CD4-positive, alpha-beta T cell (primary cell): ENCODE measurements at regions of chr1 and their contacts with region 1.

Region 1: DNA sequence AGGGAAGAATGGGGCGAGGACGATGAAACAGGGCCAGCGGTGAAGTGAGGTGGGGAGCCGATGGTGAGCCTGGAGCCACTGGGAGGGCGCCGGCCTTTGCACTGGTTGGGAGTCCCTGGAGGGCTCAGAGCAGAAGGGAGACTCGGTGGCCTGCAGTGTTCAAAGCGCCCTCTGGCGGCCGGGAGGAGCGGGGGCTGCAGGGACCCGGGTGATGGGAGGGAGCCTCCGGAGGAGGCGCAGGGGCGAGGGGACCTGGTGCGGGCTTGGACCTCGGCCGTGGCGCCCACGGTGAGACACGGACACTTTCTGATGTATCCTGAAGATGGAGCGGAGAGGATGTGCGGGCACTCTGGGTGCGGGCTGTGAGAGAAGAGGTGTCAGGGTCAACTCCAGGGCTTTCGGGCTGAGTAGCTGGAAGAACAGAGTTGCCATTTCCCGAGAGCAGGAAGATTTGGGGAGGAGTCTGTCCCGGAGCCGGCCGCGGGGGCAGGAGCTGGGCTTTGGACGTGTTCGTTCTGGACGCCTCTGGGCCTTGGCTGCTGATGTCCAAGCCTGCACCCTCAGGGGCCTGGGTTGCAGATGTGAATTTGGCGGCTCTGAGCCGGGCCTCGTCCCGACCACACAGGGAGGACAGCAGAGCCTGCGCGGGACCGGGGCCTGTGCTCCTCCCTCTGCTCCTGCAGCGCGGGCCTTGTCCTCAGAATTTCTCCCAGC is 29.7 kb downstream of the HEYL start:
- DNase-seq: peak; percentile 59 to 86 (median 74)
- ATAC-seq: peak; percentile 87
- H3K4me3 ChIP-seq: no peak overlapping the region
- H3K4me3 Mint-ChIP-seq: peak overlapping the region; percentile 48
- H3K27ac ChIP-seq: no peak overlapping the region
- H3K27ac Mint-ChIP-seq: no peak overlapping the region
- H3K4me1 ChIP-seq: peaks cover 7% of the 10 kb centered on the region
- H3K4me1 Mint-ChIP-seq: peaks cover 12% of the 10 kb centered on the region
- H3K27me3 ChIP-seq: peaks cover 0 to 5% of the 10 kb centered on the region in 2 experiments
- H3K27me3 Mint-ChIP-seq: peaks cover 6% of the 10 kb centered on the region
- CTCF ChIP-seq: peak; percentile 74

Region 2: DNA sequence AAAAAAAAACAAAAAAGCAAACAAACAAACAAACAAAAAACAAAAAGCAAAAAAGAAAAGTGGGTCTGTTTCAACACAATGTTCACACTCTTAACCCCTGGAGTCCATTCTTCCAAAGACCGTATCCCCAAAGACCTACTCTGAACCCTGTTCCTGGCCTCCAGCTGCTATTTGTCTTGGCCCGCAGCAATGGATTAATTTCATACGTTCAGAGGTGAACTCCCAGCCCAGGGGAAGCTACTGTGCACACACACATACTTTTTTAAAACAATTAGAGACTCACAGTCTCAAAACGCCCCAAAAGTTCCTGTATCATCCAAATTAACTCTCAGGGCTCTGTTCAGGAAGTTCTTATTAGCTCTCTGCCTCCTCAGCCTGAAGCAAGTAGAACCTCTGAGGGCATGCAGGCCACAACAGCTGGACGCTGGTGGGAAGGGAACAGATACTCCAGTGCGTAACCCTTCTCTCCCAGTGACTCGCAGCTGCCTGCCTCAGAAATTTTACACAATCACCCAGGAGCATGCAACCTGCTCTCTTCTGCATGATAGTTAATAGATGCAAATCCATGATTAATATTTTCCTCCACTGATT is 1145.6 kb before region 1 on chr1:
- CTCF ChIA-PET with region 1: no interaction called
- POLR2A ChIA-PET with region 1: no interaction called
- intact Hi-C with region 1: no loop called
- DNase-seq: no peak
- ATAC-seq: no peak
- H3K4me3 ChIP-seq: no peak overlapping the region
- H3K4me3 Mint-ChIP-seq: no peak overlapping the region
- H3K27ac ChIP-seq: no peak overlapping the region
- H3K27ac Mint-ChIP-seq: no peak overlapping the region
- H3K4me1 ChIP-seq: no peaks in the 10 kb centered on the region
- H3K4me1 Mint-ChIP-seq: no peaks in the 10 kb centered on the region
- H3K27me3 ChIP-seq: peaks cover 0 to 5% of the 10 kb centered on the region in 2 experiments
- H3K27me3 Mint-ChIP-seq: peaks cover 31% of the 10 kb centered on the region
- CTCF ChIP-seq: no peak

Region 3: DNA sequence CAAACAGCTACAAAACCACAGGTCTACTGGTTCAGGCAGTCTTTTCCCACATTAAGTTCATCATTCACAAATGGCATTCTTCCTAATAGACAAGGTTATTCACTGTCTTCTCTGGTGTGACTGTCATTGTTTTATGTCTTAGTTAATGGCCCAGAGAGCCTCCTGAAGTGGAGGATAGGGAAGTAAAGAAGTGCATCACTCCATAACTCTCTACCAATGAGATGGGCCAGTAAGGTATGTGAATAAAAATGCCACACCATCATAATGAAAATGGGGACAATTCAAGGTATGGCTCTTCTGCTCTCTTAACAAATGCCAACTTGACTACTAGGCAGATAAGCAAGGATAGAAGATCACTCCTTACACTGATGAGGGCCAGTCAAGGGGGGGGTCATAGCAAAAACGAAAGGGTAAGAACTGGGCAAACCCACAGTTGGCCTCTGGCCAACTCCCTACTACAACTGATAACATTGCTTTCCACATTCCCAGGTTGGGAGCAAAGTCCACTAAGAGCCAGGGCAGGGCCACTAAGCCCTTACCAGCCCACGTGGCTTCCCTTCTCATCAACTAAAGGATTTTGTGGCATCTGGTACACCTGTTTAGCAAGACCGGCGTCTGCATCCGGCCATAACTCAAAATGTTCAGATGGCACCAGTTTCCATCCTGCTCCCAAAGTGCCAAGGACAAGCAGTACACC is 43.2 kb before region 1 on chr1:
- CTCF ChIA-PET with region 1: no interaction called
- POLR2A ChIA-PET with region 1: no interaction called
- intact Hi-C with region 1: no loop called
- DNase-seq: no peak
- ATAC-seq: no peak
- H3K4me3 ChIP-seq: no peak overlapping the region
- H3K4me3 Mint-ChIP-seq: no peak overlapping the region
- H3K27ac ChIP-seq: no peak overlapping the region
- H3K27ac Mint-ChIP-seq: no peak overlapping the region
- H3K4me1 ChIP-seq: peaks cover 7% of the 10 kb centered on the region
- H3K4me1 Mint-ChIP-seq: peaks cover 15% of the 10 kb centered on the region
- H3K27me3 ChIP-seq: no peaks in the 10 kb centered on the region
- H3K27me3 Mint-ChIP-seq: no peaks in the 10 kb centered on the region
- CTCF ChIP-seq: no peak

Region 4: DNA sequence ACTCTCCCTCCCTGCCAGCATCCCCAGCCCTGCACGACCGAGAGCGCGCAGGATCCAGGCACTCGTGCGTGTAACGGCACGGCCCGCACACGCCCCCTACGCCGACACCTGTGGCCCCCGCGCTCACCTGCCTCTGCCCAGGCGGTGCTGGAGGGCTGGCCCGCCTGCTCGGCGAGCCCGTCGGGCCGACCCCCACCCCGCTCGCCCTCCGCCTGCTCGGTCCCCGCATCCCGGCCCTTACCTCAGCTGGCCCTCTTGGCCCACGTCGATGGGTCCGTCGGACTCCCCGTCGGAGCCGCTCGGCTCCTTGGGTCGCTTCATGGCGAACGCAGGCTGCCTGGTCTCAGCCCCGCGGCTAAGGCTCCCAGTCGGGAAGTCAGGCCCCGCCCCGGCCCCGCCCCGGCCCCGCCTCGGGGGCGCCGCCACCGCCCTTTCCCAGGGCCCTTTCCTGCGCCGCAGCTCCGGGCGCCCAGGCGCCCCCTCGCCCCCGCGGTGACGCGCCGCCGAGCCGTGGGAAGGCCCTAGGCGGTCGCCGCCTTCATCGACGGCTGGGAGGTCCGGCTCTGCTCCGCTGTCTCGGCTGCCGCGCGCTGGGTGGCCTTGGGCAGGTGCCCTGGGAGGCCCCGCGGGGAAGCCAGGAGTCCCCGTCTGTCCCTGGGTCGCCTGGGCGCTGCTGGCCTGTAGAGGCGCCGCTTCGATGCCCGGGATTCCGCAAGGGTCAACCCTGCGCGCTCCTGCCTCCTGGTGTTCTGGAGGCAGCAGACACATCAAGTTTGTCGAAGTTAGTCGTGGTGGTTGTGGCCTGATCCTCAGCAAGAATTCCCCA is 29.7 kb after region 1 on chr1 and contains the start of gene HEYL:
- CTCF ChIA-PET with region 1: no interaction called
- POLR2A ChIA-PET with region 1: no interaction called
- intact Hi-C with region 1: no loop called
- DNase-seq: peak; percentile 19 to 78 (median 62)
- ATAC-seq: peak; percentile 91
- H3K4me3 ChIP-seq: peak within 1 kb of the TSS; percentile 25
- H3K4me3 Mint-ChIP-seq: peak within 1 kb of the TSS; percentile 61
- H3K27ac ChIP-seq: no peak within 1 kb of the TSS
- H3K27ac Mint-ChIP-seq: no peak within 1 kb of the TSS
- H3K4me1 ChIP-seq: peaks cover 6% of the 10 kb centered on the region
- H3K4me1 Mint-ChIP-seq: no peaks in the 10 kb centered on the region
- H3K27me3 ChIP-seq: peaks cover 11 to 22% of the 10 kb centered on the region in 2 experiments
- H3K27me3 Mint-ChIP-seq: peaks cover 43% of the 10 kb centered on the region
- CTCF ChIP-seq: no peak
- total RNA-seq, gene HEYL: 0.05 TPM in 1 of 2 experiments, not detected in the other

Region 5: DNA sequence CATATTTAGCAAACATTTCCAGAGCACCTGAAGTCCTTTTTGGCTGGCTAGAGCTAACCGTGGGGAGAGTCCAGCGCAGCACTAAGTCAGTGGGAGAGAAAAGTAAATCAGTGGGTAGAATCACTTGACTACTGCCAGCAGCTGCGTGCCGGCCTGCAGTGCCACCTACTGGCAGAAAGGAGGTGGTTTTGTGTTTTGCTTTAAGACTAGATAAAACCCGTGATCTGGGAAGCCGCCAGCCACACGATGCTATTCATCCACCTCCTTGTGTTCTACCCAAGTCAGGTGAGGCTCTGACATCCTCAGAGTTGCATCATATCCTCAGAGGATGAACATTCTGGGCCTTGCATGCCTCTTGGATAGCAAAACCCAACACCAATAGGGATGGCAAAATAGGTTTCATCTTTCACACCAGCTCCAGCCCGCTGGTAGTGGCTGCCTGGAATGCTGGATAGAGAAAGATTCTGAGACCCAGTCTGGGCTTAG is 43.8 kb after region 1 on chr1:
- CTCF ChIA-PET with region 1: interaction called, 25 read pairs
- POLR2A ChIA-PET with region 1: interaction called, 5 read pairs
- intact Hi-C with region 1: loop called (anchors 1 kb)
- DNase-seq: peak; percentile 59 to 85 (median 68)
- ATAC-seq: peak; percentile 88
- H3K4me3 ChIP-seq: no peak overlapping the region
- H3K4me3 Mint-ChIP-seq: no peak overlapping the region
- H3K27ac ChIP-seq: no peak overlapping the region
- H3K27ac Mint-ChIP-seq: no peak overlapping the region
- H3K4me1 ChIP-seq: peaks cover 11% of the 10 kb centered on the region
- H3K4me1 Mint-ChIP-seq: peaks cover 7% of the 10 kb centered on the region
- H3K27me3 ChIP-seq: peaks cover 3 to 7% of the 10 kb centered on the region in 2 experiments
- H3K27me3 Mint-ChIP-seq: peaks cover 13% of the 10 kb centered on the region
- CTCF ChIP-seq: peak; percentile 98

Region 6: GRCh38 chr1:39720094-39720999 is 110.6 kb after region 1 on chr1:
- CTCF ChIA-PET with region 1: interaction called, 13 read pairs
- POLR2A ChIA-PET with region 1: no interaction called
- intact Hi-C with region 1: loop called (anchors 1 kb)
- DNase-seq: peak in 3 of 14 experiments; percentile 80 to 83 (median 81)
- ATAC-seq: peak; percentile 90
- H3K4me3 ChIP-seq: no peak overlapping the region
- H3K4me3 Mint-ChIP-seq: no peak overlapping the region
- H3K27ac ChIP-seq: no peak overlapping the region
- H3K27ac Mint-ChIP-seq: no peak overlapping the region
- H3K4me1 ChIP-seq: no peaks in the 10 kb centered on the region
- H3K4me1 Mint-ChIP-seq: no peaks in the 10 kb centered on the region
- H3K27me3 ChIP-seq: peaks cover 9 to 15% of the 10 kb centered on the region in 2 experiments
- H3K27me3 Mint-ChIP-seq: peaks cover 46% of the 10 kb centered on the region
- CTCF ChIP-seq: peak; percentile 78

Region 7: GRCh38 chr1:39799770-39800470 is 190.1 kb after region 1 on chr1:
- CTCF ChIA-PET with region 1: interaction called, 4 read pairs
- POLR2A ChIA-PET with region 1: interaction called, 6 read pairs
- intact Hi-C with region 1: loop called (anchors 1 kb)
- DNase-seq: peak; percentile 44 to 78 (median 60)
- ATAC-seq: peak; percentile 60
- H3K4me3 ChIP-seq: peak overlapping the region; percentile 41
- H3K4me3 Mint-ChIP-seq: peak overlapping the region; percentile 59
- H3K27ac ChIP-seq: no peak overlapping the region
- H3K27ac Mint-ChIP-seq: peak overlapping the region; percentile 89
- H3K4me1 ChIP-seq: peaks cover 17% of the 10 kb centered on the region
- H3K4me1 Mint-ChIP-seq: peaks cover 12% of the 10 kb centered on the region
- H3K27me3 ChIP-seq: no peaks in the 10 kb centered on the region
- H3K27me3 Mint-ChIP-seq: no peaks in the 10 kb centered on the region
- CTCF ChIP-seq: peak; percentile 77

Region 8: GRCh38 chr1:39901698-39902459 is 292.1 kb after region 1 on chr1 and contains the start of gene MYCL:
- CTCF ChIA-PET with region 1: interaction called, 4 read pairs
- POLR2A ChIA-PET with region 1: interaction called, 4 read pairs
- intact Hi-C with region 1: loop called in 1 of 2 experiments (anchors 5 kb)
- DNase-seq: peak; percentile 44 to 83 (median 60)
- ATAC-seq: peak; percentile 85
- H3K4me3 ChIP-seq: peak within 1 kb of the TSS; percentile 66
- H3K4me3 Mint-ChIP-seq: peak within 1 kb of the TSS; percentile 82
- H3K27ac ChIP-seq: no peak within 1 kb of the TSS
- H3K27ac Mint-ChIP-seq: no peak within 1 kb of the TSS
- H3K4me1 ChIP-seq: peaks cover 19% of the 10 kb centered on the region
- H3K4me1 Mint-ChIP-seq: no peaks in the 10 kb centered on the region
- H3K27me3 ChIP-seq: peaks cover 41 to 49% of the 10 kb centered on the region in 2 experiments
- H3K27me3 Mint-ChIP-seq: peaks cover 78% of the 10 kb centered on the region
- CTCF ChIP-seq: peak; percentile 80
- total RNA-seq, gene MYCL: 0.08 to 0.50 TPM